Panc1 (cell line): ENCODE measurements at regions of chr12 and their contacts with region 1.

Region 1: DNA sequence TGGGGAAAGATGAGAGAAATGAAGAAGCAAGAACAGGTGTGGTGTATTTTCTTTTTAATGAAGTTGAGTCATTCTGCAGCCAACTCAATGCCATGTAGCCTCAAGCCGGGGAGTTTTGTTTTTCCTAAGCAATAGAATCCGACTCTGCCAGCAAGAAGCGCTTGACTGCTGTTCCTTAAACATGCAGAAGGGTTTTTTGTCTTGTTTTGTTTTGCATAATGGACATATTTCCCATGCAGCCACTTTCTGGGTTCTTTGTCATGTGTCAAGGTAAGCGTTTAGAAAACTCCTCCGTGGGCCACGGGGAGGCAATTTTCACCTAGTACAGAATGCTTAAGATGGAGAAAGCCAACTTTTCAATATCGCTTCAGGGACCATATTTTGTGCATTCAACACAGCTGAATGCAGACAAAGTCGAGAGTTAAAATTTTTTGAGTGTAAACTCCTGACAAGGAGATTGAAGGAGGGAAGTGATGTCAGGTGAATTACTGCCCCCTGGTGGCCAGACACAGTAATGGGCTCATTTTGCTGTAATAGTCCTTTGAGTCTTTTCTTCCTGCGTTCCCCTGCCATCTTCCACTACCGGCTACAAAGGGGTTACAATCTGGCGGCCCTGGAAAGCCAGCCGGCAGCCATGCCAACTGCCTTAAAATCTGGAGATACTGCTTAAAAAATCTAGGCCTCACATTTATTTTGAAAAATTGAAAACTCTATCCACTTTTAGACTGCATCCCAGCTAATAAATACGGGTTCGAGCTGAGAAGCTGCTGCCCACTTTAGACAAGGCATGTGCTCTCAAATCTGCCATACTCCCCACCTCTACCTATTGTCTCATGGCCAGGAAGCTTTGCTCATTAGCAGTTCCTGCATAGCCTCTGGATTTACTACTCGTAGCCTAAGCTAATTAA is 3.2 kb upstream of the FICD start:
- DNase-seq: peak; percentile 61
- ATAC-seq: no peak; the same call in 1 of the 2 replicates
- H3K4me3 ChIP-seq: no peak overlapping the region
- H3K27ac ChIP-seq: peak overlapping the region; percentile 32
- H3K4me1 ChIP-seq: peaks cover 13% of the 10 kb centered on the region
- H3K27me3 ChIP-seq: no peaks in the 10 kb centered on the region
- CTCF ChIP-seq: peak; percentile 90

Region 2: GRCh38 chr12:107917912-107918800 is 593.7 kb before region 1 on chr12:
- CTCF ChIA-PET with region 1: no interaction called
- POLR2A ChIA-PET with region 1: no interaction called
- in situ Hi-C with region 1: no loop called
- intact Hi-C with region 1: loop called (anchors 1 kb)
- DNase-seq: no peak
- ATAC-seq: peak; percentile 92
- H3K4me3 ChIP-seq: no peak overlapping the region
- H3K27ac ChIP-seq: no peak overlapping the region
- H3K4me1 ChIP-seq: no peaks in the 10 kb centered on the region
- H3K27me3 ChIP-seq: peaks cover 2% of the 10 kb centered on the region; the same call in 1 of the 2 replicates
- CTCF ChIP-seq: peak; percentile 89

Region 3: DNA sequence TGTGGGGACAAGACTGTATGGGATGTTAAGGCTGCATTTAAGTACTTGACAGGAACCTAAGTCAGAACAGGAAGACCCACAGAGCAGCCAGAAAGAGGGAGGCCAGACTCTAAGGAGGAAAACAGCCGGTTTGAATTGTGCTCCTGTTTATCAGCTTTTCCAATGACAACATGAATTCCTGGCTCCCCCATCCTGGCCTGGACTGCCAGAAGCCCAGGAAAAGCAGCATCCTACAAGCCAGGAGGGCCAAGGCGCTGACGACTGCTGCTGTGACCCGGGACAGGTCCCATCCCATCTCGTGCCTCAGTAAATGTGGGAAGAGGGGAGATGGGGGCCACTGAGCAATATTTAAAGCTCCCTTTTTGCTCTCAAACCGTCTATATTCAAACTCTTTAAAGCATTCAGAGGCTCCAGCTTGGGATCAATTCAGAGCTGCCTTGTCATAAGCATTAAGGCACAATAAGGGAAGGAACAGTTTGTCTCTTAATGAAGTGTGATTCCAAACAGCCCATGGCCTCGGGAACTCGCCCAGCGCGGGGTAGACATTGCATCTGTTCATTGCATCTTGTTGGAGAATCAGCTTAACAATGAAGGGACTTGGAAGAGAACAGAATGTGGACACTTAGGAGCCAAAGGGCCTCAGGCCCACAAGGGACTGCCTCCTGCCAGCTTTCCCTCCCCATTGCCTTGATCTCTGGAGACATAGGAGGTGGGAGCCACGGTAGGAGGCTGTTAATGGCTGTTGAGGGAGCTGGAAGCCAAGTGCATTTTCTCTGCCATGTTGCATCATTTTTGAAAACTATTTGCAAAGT is 222.3 kb before region 1 on chr12:
- CTCF ChIA-PET with region 1: no interaction called
- POLR2A ChIA-PET with region 1: no interaction called
- in situ Hi-C with region 1: no loop called
- intact Hi-C with region 1: no loop called
- DNase-seq: no peak
- ATAC-seq: no peak
- H3K4me3 ChIP-seq: no peak overlapping the region
- H3K27ac ChIP-seq: no peak overlapping the region
- H3K4me1 ChIP-seq: no peaks in the 10 kb centered on the region
- H3K27me3 ChIP-seq: peaks cover 7% of the 10 kb centered on the region; the same call in 1 of the 2 replicates
- CTCF ChIP-seq: no peak